ENCODE measurements at regions of chr5 and their contacts with region 1.

Region 1: GRCh38 chr5:123527190-123527589 is 15.2 kb downstream of the CSNK1G3 start:
- DNase-seq: no peak
- ATAC-seq: no peak
- H3K4me3 ChIP-seq: no peak overlapping the region
- H3K4me3 Mint-ChIP-seq: no peak overlapping the region
- H3K27ac ChIP-seq: no peak overlapping the region
- H3K27ac Mint-ChIP-seq: no peak overlapping the region
- H3K4me1 ChIP-seq: peaks cover 11% of the 10 kb centered on the region
- H3K4me1 Mint-ChIP-seq: peaks cover 67% of the 10 kb centered on the region
- H3K27me3 ChIP-seq: no peaks in the 10 kb centered on the region
- H3K27me3 Mint-ChIP-seq: no peaks in the 10 kb centered on the region
- CTCF ChIP-seq: no peak

Region 2: GRCh38 chr5:123545506-123545905 is 18.3 kb after region 1 on chr5:
- CTCF ChIA-PET with region 1: no interaction called
- POLR2A ChIA-PET with region 1: interaction called, 5 read pairs
- intact Hi-C with region 1: loop called in 1 of 2 experiments (anchors 2 kb)
- DNase-seq: peak in 4 of 9 experiments; percentile 25 to 61 (median 34)
- ATAC-seq: no peak
- H3K4me3 ChIP-seq: no peak overlapping the region
- H3K4me3 Mint-ChIP-seq: no peak overlapping the region
- H3K27ac ChIP-seq: no peak overlapping the region
- H3K27ac Mint-ChIP-seq: no peak overlapping the region
- H3K4me1 ChIP-seq: peaks cover 22% of the 10 kb centered on the region
- H3K4me1 Mint-ChIP-seq: peaks cover 61% of the 10 kb centered on the region
- H3K27me3 ChIP-seq: no peaks in the 10 kb centered on the region
- H3K27me3 Mint-ChIP-seq: no peaks in the 10 kb centered on the region
- CTCF ChIP-seq: peak; percentile 54